Sigmoid colon (tissue), 7 donors: ENCODE measurements at regions of chr17 and their contacts with region 1.

Region 1: DNA sequence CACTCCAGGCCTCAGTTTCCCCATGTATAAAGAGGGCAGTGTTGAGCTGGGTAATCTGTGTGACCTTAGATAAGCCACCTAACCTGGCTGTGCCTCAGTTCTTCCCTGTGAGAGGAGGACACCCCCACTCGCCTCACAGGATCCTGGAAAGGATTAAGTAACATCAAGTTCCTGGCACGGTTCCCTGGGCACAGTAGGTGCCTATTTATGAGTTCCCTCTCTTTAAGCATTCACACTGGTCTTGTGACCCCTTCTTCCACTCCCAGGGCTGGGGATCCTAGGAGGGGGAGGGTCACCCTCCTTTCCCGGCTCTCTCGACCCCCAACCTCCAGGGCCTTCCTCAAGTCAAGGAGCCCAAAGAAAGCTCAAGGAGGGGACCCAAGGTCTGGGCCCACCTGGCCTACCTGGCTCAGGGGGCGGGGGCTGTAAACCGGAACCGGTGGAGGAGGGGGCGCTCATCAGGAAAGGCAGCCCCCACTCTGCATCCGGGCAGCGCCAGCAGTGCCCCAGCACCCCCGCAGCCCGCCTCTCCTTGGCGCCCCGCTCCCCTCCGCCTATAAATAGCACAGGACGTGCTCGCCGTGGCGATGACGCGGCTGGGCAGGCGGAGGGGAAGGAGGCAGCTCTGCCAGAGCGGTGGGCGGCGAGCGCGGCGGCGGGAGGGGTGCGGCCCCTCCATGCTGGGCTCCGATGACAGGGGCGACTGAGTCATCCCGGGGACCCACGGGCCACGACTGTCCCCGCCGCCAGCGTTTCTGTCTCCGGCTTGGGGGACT is 9.4 kb downstream of the RPL19 start:
- DNase-seq: peak; percentile 95
- H3K4me3 ChIP-seq: peak overlapping the region; percentile 30 to 57 (median 48)
- H3K27ac ChIP-seq: peak overlapping the region; percentile 0 to 74 (median 52)
- H3K4me1 ChIP-seq: peaks cover 0 to 25% (median 23%) of the 10 kb centered on the region in 4 donors
- H3K27me3 ChIP-seq: peaks cover 0 to 4% (median 0%) of the 10 kb centered on the region in 3 donors
- CTCF ChIP-seq: no peak
- EP300 ChIP-seq: peak in 3 of 4 donors; percentile 61 to 81 (median 70)
- POLR2A ChIP-seq: no peak

Region 2: DNA sequence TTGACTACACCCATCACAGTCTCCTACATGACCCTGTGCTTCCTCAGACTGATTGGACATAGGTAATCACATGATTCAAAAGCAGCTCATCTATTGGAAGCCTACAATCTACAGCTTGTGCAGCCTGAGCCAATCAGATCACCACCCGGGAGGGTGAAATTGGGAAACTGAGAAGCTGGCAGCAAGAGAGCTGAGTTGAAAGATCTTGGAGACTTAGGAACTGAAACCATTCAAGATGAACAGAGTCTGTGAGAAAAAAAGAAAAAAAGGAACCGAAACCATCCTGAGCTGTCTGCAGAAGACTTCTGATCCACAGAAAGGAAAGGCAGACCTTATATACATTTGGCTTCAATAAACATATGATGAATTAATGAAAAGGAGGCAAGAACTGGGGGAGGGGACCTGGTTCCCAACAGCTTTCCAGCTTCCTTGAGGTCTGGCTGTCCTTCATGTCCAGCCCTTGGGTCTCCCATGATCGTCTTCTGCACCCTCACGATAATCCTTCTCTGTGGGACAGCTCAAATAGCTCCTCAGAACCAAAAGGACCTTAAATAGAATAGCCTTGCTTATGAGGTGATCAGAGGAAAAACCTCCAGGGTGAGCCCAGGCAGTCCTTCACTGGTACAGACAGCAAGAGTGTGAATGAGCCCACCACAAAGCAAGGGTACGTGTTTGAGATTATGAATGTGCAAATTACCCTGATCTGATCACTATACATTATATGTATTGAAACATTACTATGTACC is 90.7 kb before region 1 on chr17:
- intact Hi-C with region 1: no loop called
- DNase-seq: no peak
- H3K4me3 ChIP-seq: no peak overlapping the region
- H3K27ac ChIP-seq: no peak overlapping the region
- H3K4me1 ChIP-seq: peaks cover 0 to 14% (median 13%) of the 10 kb centered on the region in 4 donors
- H3K27me3 ChIP-seq: no peaks in the 10 kb centered on the region
- CTCF ChIP-seq: no peak
- EP300 ChIP-seq: no peak
- POLR2A ChIP-seq: no peak

Region 3: GRCh38 chr17:39231591-39232551 is 22.4 kb after region 1 on chr17:
- intact Hi-C with region 1: loop called (anchors 2 kb)
- DNase-seq: peak; percentile 74
- H3K4me3 ChIP-seq: peak overlapping the region in 1 of 4 donors; percentile 1
- H3K27ac ChIP-seq: no peak overlapping the region
- H3K4me1 ChIP-seq: peaks cover 0 to 13% (median 10%) of the 10 kb centered on the region in 4 donors
- H3K27me3 ChIP-seq: peaks cover 9 to 81% (median 37%) of the 10 kb centered on the region in 3 donors
- CTCF ChIP-seq: peak; percentile 51 to 84 (median 64)
- EP300 ChIP-seq: no peak
- POLR2A ChIP-seq: no peak

Region 4: GRCh38 chr17:39244600-39245570 is 35.4 kb after region 1 on chr17:
- intact Hi-C with region 1: loop called (anchors 1 kb)
- DNase-seq: peak; percentile 92
- H3K4me3 ChIP-seq: no peak overlapping the region
- H3K27ac ChIP-seq: no peak overlapping the region
- H3K4me1 ChIP-seq: no peaks in the 10 kb centered on the region
- H3K27me3 ChIP-seq: peaks cover 0 to 12% (median 0%) of the 10 kb centered on the region in 3 donors
- CTCF ChIP-seq: peak; percentile 78 to 97 (median 90)
- EP300 ChIP-seq: no peak
- POLR2A ChIP-seq: no peak

Region 5: GRCh38 chr17:39916918-39917317 is 707.4 kb after region 1 on chr17:
- intact Hi-C with region 1: no loop called
- DNase-seq: no peak
- H3K4me3 ChIP-seq: no peak overlapping the region
- H3K27ac ChIP-seq: no peak overlapping the region
- H3K4me1 ChIP-seq: no peaks in the 10 kb centered on the region
- H3K27me3 ChIP-seq: no peaks in the 10 kb centered on the region
- CTCF ChIP-seq: no peak
- EP300 ChIP-seq: no peak
- POLR2A ChIP-seq: no peak